Heart left ventricle (tissue), 16 donors: ENCODE measurements at regions of chr2 and their contacts with region 1.

Region 1: GRCh38 chr2:11080253-11081115 is 74.8 kb upstream of the SLC66A3 start:
- DNase-seq: no peak
- ATAC-seq: no peak
- H3K4me3 ChIP-seq: no peak overlapping the region
- H3K27ac ChIP-seq: no peak overlapping the region
- H3K4me1 ChIP-seq: no peaks in the 10 kb centered on the region
- H3K27me3 ChIP-seq: peaks cover 0 to 5% (median 0%) of the 10 kb centered on the region in 9 donors
- CTCF ChIP-seq: no peak
- POLR2A ChIP-seq: no peak

Region 2: DNA sequence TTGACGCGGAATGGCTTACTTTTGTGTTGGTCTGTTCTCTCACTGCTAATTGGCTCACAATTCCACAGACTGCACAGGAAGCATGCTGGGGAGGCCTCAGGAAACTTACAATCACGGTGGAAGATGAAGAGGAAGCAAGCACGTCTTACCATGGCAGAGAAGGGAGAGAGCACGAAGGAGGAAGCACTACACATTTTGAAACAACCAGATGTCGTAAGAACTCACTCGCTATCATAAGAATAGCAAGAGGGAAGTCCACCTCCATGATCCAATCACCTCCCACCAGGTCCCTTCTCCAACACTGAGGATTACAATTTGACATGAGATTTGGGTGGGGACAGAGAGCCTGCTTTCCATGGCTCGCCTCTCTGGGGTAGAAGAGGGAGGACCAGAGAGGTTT is 62.6 kb before region 1 on chr2:
- intact Hi-C with region 1: loop called in 1 of 10 experiments (anchors 5 kb)
- DNase-seq: no peak
- ATAC-seq: no peak
- H3K4me3 ChIP-seq: no peak overlapping the region
- H3K27ac ChIP-seq: no peak overlapping the region
- H3K4me1 ChIP-seq: no peaks in the 10 kb centered on the region
- H3K27me3 ChIP-seq: peaks cover 0 to 19% (median 5%) of the 10 kb centered on the region in 9 donors
- CTCF ChIP-seq: no peak
- POLR2A ChIP-seq: no peak